ENCODE measurements at regions of chrX and their contacts with region 1.

Region 1: GRCh38 chrX:40647307-40648197 is at the start of gene CXorf38:
- DNase-seq: peak; percentile 82 to 98 (median 91)
- ATAC-seq: peak; percentile 74
- H3K4me3 ChIP-seq: peak within 1 kb of the TSS; percentile 63 to 72
- H3K4me3 Mint-ChIP-seq: peak within 1 kb of the TSS; percentile 95
- H3K27ac ChIP-seq: peak within 1 kb of the TSS; percentile 65 to 87
- H3K27ac Mint-ChIP-seq: peak within 1 kb of the TSS; percentile 96
- H3K4me1 ChIP-seq: peaks cover 17% of the 10 kb centered on the region
- H3K4me1 Mint-ChIP-seq: peaks cover 33% of the 10 kb centered on the region
- H3K27me3 ChIP-seq: no peaks in the 10 kb centered on the region
- H3K27me3 Mint-ChIP-seq: no peaks in the 10 kb centered on the region
- CTCF ChIP-seq: no peak
- total RNA-seq, gene CXorf38: 10.6 to 11.0 TPM

Region 2: DNA sequence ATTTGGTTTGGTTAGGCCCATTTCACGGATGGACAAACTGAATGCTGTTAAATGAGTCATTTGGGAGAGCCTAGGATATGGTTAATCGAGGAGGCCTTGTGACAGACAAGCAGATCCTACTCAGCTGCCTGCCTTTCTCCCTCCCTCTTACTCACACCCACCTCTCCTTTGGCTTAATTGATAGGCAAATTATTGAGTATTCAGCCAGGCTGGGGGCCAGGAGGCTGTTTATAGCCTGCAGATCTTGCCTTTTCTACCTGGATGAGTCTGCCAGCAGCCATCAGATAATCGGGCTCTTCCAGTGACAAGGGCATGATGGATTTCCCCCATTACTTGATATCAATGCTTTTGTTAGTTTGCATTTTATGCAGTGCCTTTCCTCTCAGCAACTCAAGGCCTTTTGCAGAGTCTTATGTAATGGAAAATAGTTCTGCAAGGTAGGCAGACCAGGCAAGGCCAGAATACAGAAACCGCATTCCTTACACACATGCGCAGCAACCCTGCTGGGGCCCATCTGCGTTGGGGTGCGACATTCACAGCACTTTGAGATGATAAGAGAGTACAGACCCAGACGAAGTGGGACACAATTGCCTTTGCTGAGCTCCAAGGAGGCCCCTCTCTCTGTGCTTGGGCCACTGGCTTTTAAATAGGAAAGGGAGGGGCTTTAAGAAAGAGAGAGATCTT is 163.0 kb before region 1 on chrX:
- CTCF ChIA-PET with region 1: no interaction called
- POLR2A ChIA-PET with region 1: no interaction called
- intact Hi-C with region 1: no loop called
- DNase-seq: no peak
- ATAC-seq: no peak
- H3K4me3 ChIP-seq: no peak overlapping the region
- H3K4me3 Mint-ChIP-seq: no peak overlapping the region
- H3K27ac ChIP-seq: no peak overlapping the region
- H3K27ac Mint-ChIP-seq: no peak overlapping the region
- H3K4me1 ChIP-seq: no peaks in the 10 kb centered on the region
- H3K4me1 Mint-ChIP-seq: peaks cover 11% of the 10 kb centered on the region
- H3K27me3 ChIP-seq: no peaks in the 10 kb centered on the region
- H3K27me3 Mint-ChIP-seq: no peaks in the 10 kb centered on the region
- CTCF ChIP-seq: no peak

Region 3: DNA sequence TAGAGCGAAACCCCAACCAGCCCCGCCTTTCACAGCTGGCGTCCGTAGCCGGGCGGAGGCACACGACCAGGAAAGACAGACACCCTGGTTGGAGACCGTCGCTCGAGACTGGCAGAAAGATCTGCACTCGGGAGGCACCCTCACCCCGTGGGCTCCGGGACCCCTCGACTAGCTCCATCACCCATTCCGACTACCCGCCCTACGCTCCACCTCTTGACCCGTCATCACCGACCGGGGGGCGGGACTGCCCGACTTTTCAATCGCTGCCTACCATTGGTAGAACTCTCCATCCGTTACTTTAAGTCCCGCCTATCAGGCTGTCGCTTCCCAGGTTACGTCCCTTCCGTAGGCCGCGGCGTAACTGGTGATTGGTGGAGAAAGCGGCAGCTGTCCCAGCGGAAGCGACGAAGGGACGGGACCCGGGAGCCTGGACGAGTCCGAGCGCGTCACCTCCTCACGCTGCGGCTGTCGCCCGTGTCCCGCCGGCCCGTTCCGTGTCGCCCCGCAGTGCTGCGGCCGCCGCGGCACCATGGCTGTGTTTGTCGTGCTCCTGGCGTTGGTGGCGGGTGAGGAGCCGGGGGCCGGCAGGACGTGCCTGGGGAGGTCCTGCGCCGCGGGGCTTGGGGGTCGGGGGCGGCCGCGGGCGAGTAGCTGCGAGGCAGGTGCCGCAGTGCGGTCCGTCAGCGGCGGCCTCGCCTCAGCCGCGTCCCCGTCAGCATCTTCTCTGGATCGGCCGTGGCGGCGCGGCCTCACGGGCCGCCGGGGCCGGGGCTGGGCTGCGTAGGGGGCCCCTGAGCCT is 66.8 kb before region 1 on chrX and contains the start of gene ATP6AP2:
- CTCF ChIA-PET with region 1: no interaction called
- POLR2A ChIA-PET with region 1: interaction called, 5 read pairs
- intact Hi-C with region 1: loop called (anchors 1 kb)
- DNase-seq: peak; percentile 76 to 95 (median 88)
- ATAC-seq: peak; percentile 95
- H3K4me3 ChIP-seq: peak within 1 kb of the TSS; percentile 82 to 93
- H3K4me3 Mint-ChIP-seq: peak within 1 kb of the TSS; percentile 91
- H3K27ac ChIP-seq: peak within 1 kb of the TSS; percentile 89 to 96
- H3K27ac Mint-ChIP-seq: peak within 1 kb of the TSS; percentile 97
- H3K4me1 ChIP-seq: peaks cover 18% of the 10 kb centered on the region
- H3K4me1 Mint-ChIP-seq: peaks cover 30% of the 10 kb centered on the region
- H3K27me3 ChIP-seq: no peaks in the 10 kb centered on the region
- H3K27me3 Mint-ChIP-seq: no peaks in the 10 kb centered on the region
- CTCF ChIP-seq: no peak
- total RNA-seq, gene ATP6AP2: 62.0 to 67.3 TPM

Region 4: DNA sequence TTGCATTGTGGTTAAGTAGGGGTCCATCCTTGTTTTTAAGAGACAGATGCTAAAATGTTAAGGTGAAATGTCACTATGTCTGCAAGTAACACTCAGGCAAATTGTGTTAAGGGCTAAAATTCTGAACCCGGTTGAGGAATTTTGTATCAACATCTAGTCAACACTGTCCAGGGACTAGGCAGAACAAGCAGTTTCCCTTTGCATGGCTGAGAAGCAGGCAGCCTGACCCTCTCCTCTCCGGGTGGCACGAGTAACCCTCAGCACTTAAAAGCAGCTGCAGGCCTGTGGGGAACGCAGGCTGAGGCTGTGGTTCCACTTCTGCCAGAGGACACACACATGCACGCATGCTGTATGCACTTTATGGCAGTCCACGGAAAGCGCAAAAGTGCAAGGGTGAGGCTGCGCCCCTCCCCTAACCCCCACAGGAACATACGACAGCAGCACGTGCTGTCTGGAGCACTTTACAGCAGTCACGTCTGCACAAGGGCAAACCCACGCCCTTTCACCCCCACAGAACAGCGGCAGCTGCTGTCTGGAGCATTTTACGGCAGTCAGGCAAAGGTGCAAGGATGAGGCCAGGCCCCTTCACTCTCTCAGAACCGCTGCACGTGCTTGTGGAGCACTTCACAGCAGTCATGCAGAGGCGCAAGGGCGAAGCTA is 24.9 kb before region 1 on chrX:
- CTCF ChIA-PET with region 1: no interaction called
- POLR2A ChIA-PET with region 1: no interaction called
- intact Hi-C with region 1: no loop called
- DNase-seq: no peak
- ATAC-seq: no peak
- H3K4me3 ChIP-seq: no peak overlapping the region
- H3K4me3 Mint-ChIP-seq: no peak overlapping the region
- H3K27ac ChIP-seq: no peak overlapping the region
- H3K27ac Mint-ChIP-seq: no peak overlapping the region
- H3K4me1 ChIP-seq: no peaks in the 10 kb centered on the region
- H3K4me1 Mint-ChIP-seq: no peaks in the 10 kb centered on the region
- H3K27me3 ChIP-seq: no peaks in the 10 kb centered on the region
- H3K27me3 Mint-ChIP-seq: no peaks in the 10 kb centered on the region
- CTCF ChIP-seq: no peak

Region 5: DNA sequence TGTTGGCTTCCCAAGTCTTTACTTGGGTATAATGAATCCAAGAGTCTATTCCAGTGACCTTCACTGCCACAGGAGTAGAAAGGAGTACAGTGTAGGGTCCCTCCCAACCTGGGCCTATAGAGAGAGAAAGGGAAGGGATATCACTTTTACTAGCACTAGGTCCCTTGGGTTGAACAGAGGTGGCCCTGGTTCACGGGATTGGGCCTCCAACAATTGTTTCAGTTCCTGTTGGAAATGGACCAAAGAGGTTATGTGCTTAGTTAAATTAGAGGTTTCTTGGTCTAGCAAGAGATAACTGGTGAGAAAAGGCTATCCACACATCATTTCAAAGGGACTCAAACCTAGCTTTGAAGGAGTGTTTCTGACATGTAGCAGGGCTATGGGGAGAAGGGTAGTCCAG is 144.9 kb after region 1 on chrX:
- CTCF ChIA-PET with region 1: interaction called, 67 read pairs
- POLR2A ChIA-PET with region 1: no interaction called
- intact Hi-C with region 1: loop called (anchors 1 kb)
- DNase-seq: no peak
- ATAC-seq: no peak
- H3K4me3 ChIP-seq: no peak overlapping the region
- H3K4me3 Mint-ChIP-seq: no peak overlapping the region
- H3K27ac ChIP-seq: no peak overlapping the region
- H3K27ac Mint-ChIP-seq: no peak overlapping the region
- H3K4me1 ChIP-seq: no peaks in the 10 kb centered on the region
- H3K4me1 Mint-ChIP-seq: peaks cover 3% of the 10 kb centered on the region
- H3K27me3 ChIP-seq: no peaks in the 10 kb centered on the region
- H3K27me3 Mint-ChIP-seq: no peaks in the 10 kb centered on the region
- CTCF ChIP-seq: no peak

Region 6: GRCh38 chrX:41116948-41117347 is 469.4 kb after region 1 on chrX:
- CTCF ChIA-PET with region 1: interaction called, 5 read pairs
- POLR2A ChIA-PET with region 1: no interaction called
- intact Hi-C with region 1: loop called in 1 of 2 experiments (anchors 10 kb)
- DNase-seq: peak in 2 of 9 experiments; percentile 48 to 65
- ATAC-seq: peak; percentile 62
- H3K4me3 ChIP-seq: no peak overlapping the region
- H3K4me3 Mint-ChIP-seq: peak overlapping the region; percentile 63
- H3K27ac ChIP-seq: peak overlapping the region in 1 of 2 experiments; percentile 38
- H3K27ac Mint-ChIP-seq: peak overlapping the region; percentile 79
- H3K4me1 ChIP-seq: peaks cover 43% of the 10 kb centered on the region
- H3K4me1 Mint-ChIP-seq: peaks cover 74% of the 10 kb centered on the region
- H3K27me3 ChIP-seq: no peaks in the 10 kb centered on the region
- H3K27me3 Mint-ChIP-seq: no peaks in the 10 kb centered on the region
- CTCF ChIP-seq: no peak

Region 7: DNA sequence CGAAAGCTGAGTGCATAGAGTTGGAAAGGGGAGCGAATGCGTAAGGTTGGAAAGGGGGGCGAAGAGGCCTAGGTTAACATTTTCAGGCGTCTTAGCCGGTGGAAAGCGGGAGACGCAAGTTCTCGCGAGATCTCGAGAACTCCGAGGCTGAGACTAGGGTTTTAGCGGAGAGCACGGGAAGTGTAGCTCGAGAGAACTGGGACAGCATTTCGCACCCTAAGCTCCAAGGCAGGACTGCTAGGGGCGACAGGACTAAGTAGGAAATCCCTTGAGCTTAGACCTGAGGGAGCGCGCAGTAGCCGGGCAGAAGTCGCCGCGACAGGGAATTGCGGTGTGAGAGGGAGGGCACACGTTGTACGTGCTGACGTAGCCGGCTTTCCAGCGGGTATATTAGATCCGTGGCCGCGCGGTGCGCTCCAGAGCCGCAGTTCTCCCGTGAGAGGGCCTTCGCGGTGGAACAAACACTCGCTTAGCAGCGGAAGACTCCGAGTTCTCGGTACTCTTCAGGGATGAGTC is 686.2 kb after region 1 on chrX and contains the start of gene DDX3X:
- CTCF ChIA-PET with region 1: no interaction called
- POLR2A ChIA-PET with region 1: no interaction called
- intact Hi-C with region 1: loop called (anchors 5 to 10 kb)
- DNase-seq: peak; percentile 58 to 95 (median 81)
- ATAC-seq: peak; percentile 55
- H3K4me3 ChIP-seq: peak within 1 kb of the TSS; percentile 93 to 100
- H3K4me3 Mint-ChIP-seq: peak within 1 kb of the TSS; percentile 95
- H3K27ac ChIP-seq: peak within 1 kb of the TSS; percentile 99
- H3K27ac Mint-ChIP-seq: peak within 1 kb of the TSS; percentile 99
- H3K4me1 ChIP-seq: peaks cover 14% of the 10 kb centered on the region
- H3K4me1 Mint-ChIP-seq: peaks cover 33% of the 10 kb centered on the region
- H3K27me3 ChIP-seq: no peaks in the 10 kb centered on the region
- H3K27me3 Mint-ChIP-seq: no peaks in the 10 kb centered on the region
- CTCF ChIP-seq: peak; percentile 23
- total RNA-seq, gene DDX3X: 643 to 648 TPM